ENCODE measurements at regions of chr1 and their contacts with region 1.

Region 1: GRCh38 chr1:91511386-91511785 is 10.7 kb downstream of the CDC7 start:
- DNase-seq: peak in 4 of 5 donors; percentile 41 to 46 (median 44)
- H3K4me3 ChIP-seq: no peak overlapping the region
- H3K4me3 Mint-ChIP-seq: no peak overlapping the region
- H3K27ac ChIP-seq: no peak overlapping the region
- H3K27ac Mint-ChIP-seq: peak overlapping the region in 1 of 7 donors; percentile 1
- H3K4me1 ChIP-seq: no peaks in the 10 kb centered on the region
- H3K4me1 Mint-ChIP-seq: peaks cover under 1 to 9% (median 6%) of the 10 kb centered on the region in 4 donors
- H3K27me3 ChIP-seq: no peaks in the 10 kb centered on the region
- H3K27me3 Mint-ChIP-seq: no peaks in the 10 kb centered on the region

Region 2: DNA sequence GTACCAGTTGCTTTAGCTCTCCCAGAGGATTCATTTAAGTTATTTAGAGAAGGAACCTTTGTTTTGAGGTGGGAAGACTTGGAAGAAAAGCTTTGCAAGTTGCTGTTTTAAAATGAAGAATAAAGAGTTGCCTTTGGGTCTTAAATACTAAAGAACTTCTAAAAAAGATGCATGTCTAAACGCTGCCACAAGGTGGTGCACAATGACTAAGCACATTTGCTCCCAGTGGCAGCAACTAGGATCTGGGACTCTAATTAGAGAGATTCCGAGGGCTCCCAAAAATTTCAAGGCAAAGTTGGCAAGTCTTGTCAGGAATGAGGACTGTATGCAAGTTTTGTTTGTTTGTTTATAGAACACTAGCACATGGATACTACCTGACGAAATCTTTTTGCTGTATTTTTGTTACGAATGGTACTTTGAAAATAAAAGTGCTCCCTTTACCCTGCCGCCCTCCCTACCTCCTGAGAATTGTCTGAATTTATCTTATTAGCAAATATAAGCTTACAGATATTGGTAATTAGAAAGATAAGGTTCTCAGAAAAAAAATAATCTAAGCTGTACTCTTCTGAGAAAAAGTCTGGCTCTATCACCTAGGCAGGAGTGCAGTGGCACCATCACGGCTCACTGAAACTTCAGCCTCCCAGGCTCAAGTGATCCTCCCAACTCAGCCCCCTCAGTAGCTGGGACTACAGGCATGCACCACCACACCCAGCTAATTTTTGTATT is 228.5 kb before region 1 on chr1:
- CTCF ChIA-PET with region 1: interaction called, 19 read pairs
- POLR2A ChIA-PET with region 1: no interaction called
- intact Hi-C with region 1: loop called (anchors 1 kb)
- DNase-seq: peak; percentile 32 to 38 (median 33)
- H3K4me3 ChIP-seq: no peak overlapping the region
- H3K4me3 Mint-ChIP-seq: no peak overlapping the region
- H3K27ac ChIP-seq: no peak overlapping the region
- H3K27ac Mint-ChIP-seq: no peak overlapping the region
- H3K4me1 ChIP-seq: no peaks in the 10 kb centered on the region
- H3K4me1 Mint-ChIP-seq: no peaks in the 10 kb centered on the region
- H3K27me3 ChIP-seq: no peaks in the 10 kb centered on the region
- H3K27me3 Mint-ChIP-seq: peaks cover 3 to 9% of the 10 kb centered on the region in 2 donors

Region 3: GRCh38 chr1:91476533-91477217 is 34.7 kb before region 1 on chr1:
- CTCF ChIA-PET with region 1: no interaction called
- POLR2A ChIA-PET with region 1: no interaction called
- intact Hi-C with region 1: no loop called
- DNase-seq: no peak
- H3K4me3 ChIP-seq: no peak overlapping the region
- H3K4me3 Mint-ChIP-seq: no peak overlapping the region
- H3K27ac ChIP-seq: no peak overlapping the region
- H3K27ac Mint-ChIP-seq: no peak overlapping the region
- H3K4me1 ChIP-seq: no peaks in the 10 kb centered on the region
- H3K4me1 Mint-ChIP-seq: no peaks in the 10 kb centered on the region
- H3K27me3 ChIP-seq: no peaks in the 10 kb centered on the region
- H3K27me3 Mint-ChIP-seq: no peaks in the 10 kb centered on the region

Region 4: DNA sequence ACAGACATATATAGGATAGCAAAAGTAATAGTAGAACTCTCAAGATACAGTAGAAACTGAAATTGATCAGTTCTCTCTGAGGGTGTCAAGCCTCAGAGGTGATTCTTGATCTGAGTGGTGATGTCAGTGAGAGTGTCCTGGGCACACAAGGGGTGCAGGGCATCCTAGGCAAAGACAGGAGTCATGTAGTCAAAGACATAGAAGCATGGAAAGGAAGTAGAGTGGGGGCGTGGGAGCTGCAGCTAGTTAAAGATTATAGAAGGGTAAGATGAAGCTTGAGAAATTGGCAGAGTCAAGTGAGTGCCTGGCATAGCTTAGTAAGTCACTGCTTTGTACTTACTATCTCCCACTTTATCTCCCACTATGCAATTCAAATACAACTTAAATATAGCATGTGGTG is 12.1 kb after region 1 on chr1:
- CTCF ChIA-PET with region 1: interaction called, 38 read pairs
- POLR2A ChIA-PET with region 1: no interaction called
- intact Hi-C with region 1: no loop called
- DNase-seq: no peak
- H3K4me3 ChIP-seq: no peak overlapping the region
- H3K4me3 Mint-ChIP-seq: no peak overlapping the region
- H3K27ac ChIP-seq: no peak overlapping the region
- H3K27ac Mint-ChIP-seq: peak overlapping the region in 4 of 7 donors; percentile 28 to 90 (median 64)
- H3K4me1 ChIP-seq: peaks cover 4% of the 10 kb centered on the region
- H3K4me1 Mint-ChIP-seq: peaks cover 4 to 10% (median 7%) of the 10 kb centered on the region in 4 donors
- H3K27me3 ChIP-seq: no peaks in the 10 kb centered on the region
- H3K27me3 Mint-ChIP-seq: no peaks in the 10 kb centered on the region

Region 5: DNA sequence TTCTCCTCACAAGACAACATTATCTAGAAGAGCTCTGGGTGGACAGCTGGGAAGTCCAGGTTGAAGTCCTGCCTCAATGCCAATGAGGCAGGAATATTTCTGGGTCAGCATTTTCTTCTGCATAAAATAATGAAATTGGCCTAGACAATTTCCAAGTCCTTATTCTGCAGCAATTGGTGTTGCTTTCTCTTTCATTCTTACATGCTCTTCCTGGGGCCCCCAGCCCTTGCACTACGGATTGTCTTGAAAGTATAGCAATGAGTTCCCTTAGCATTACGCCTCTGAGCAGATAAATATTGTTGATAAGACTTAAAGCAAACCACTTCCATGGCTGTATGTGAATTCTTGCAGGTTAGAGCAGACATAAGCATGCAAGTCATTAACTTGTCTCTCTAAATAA is 186.0 kb after region 1 on chr1:
- CTCF ChIA-PET with region 1: interaction called, 3 read pairs
- POLR2A ChIA-PET with region 1: no interaction called
- intact Hi-C with region 1: loop called (anchors 5 kb)
- DNase-seq: peak; percentile 56 to 75 (median 58)
- H3K4me3 ChIP-seq: no peak overlapping the region
- H3K4me3 Mint-ChIP-seq: peak overlapping the region in 7 of 8 donors; percentile 11 to 77 (median 39)
- H3K27ac ChIP-seq: no peak overlapping the region
- H3K27ac Mint-ChIP-seq: peak overlapping the region; percentile 74 to 91 (median 79)
- H3K4me1 ChIP-seq: peaks cover 23% of the 10 kb centered on the region
- H3K4me1 Mint-ChIP-seq: peaks cover 25 to 47% (median 39%) of the 10 kb centered on the region in 4 donors
- H3K27me3 ChIP-seq: no peaks in the 10 kb centered on the region
- H3K27me3 Mint-ChIP-seq: no peaks in the 10 kb centered on the region

Region 6: DNA sequence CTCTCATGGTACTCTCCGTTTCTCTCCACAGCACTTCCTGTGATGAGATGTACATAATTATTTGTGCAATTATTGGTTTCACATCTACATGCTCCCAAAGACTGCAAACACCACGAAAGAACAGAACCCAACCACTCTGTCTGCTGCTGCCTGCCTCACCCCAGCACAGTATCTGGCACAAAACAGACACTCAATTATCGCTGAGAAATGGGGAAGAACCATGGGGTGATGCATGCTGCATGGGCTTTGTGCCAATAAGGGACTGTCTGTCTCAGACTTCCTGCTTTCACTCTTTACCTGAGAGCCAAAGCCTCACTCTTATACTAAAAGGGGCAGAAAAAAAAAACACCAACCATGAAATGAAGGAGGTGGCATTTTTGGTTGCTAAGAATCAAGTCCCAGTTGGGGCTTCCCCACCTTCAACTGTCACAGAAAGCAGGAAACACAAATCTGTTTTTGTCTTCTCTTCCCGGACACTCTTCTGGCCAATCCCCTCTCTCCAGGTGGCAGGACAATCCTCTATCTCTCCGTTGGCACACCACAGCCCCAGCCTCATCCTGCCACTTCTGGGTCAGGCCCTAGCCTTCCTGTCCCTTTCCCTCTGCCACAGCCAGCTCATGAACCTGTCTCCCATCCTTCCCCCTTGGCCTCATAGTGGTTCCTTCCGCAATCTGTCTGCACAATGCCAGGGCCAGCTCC is 292.6 kb after region 1 on chr1:
- CTCF ChIA-PET with region 1: interaction called, 10 read pairs
- POLR2A ChIA-PET with region 1: interaction called, 4 read pairs
- intact Hi-C with region 1: loop called (anchors 2 kb)
- DNase-seq: peak; percentile 87 to 92 (median 89)
- H3K4me3 ChIP-seq: peak overlapping the region; percentile 27 to 61
- H3K4me3 Mint-ChIP-seq: peak overlapping the region; percentile 73 to 90 (median 80)
- H3K27ac ChIP-seq: peak overlapping the region; percentile 98
- H3K27ac Mint-ChIP-seq: peak overlapping the region; percentile 97 to 100 (median 100)
- H3K4me1 ChIP-seq: peaks cover 49% of the 10 kb centered on the region
- H3K4me1 Mint-ChIP-seq: peaks cover 44 to 66% (median 51%) of the 10 kb centered on the region in 4 donors
- H3K27me3 ChIP-seq: no peaks in the 10 kb centered on the region
- H3K27me3 Mint-ChIP-seq: no peaks in the 10 kb centered on the region

Region 7: DNA sequence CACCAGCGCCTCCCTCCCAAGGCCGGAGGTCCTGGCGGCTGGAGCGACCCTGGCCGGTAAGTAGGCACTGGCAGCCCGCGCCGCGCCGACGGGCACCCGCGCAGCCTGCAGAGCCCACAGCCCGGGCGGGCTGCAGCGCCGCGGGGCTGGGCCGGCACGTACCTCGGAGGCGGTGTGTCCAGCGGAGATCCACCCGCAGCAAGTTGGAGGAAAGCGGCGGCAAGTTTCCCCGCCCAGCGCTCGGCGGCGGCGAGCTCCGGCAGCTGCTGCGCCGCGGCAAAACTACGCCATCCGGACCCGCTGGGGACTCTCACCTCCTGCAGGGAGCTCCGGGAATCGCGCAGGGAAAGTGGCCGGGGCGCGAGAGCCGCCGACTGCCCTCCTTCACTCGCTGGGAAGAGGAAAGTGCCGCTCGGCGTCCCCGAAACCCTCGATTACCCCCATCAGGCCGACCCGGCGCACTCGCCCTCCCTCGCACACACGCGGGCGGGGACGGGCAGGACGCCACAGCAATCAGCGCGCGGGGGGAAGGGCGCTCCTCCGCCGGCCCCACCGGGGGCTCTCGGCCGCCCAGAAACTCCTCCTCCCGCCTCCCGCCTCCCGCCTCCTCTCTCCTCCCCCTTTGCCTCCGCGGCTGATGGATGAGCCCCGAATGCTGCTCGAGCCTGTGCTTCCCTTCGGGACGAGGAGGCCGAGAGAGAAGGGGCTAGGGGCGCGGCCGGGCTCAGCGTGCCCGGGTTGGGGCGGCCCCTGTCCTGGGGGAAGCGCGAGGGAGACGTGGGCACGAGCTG is 374.5 kb after region 1 on chr1 and contains the start of gene TGFBR3:
- CTCF ChIA-PET with region 1: interaction called, 73 read pairs
- POLR2A ChIA-PET with region 1: interaction called, 6 read pairs
- intact Hi-C with region 1: loop called (anchors 1 kb)
- DNase-seq: peak; percentile 78 to 81 (median 80)
- H3K4me3 ChIP-seq: peak within 1 kb of the TSS; percentile 67 to 87
- H3K4me3 Mint-ChIP-seq: peak within 1 kb of the TSS; percentile 94 to 99 (median 97)
- H3K27ac ChIP-seq: peak within 1 kb of the TSS; percentile 65
- H3K27ac Mint-ChIP-seq: peak within 1 kb of the TSS; percentile 84 to 97 (median 94)
- H3K4me1 ChIP-seq: peaks cover 37% of the 10 kb centered on the region
- H3K4me1 Mint-ChIP-seq: peaks cover 30 to 52% (median 39%) of the 10 kb centered on the region in 4 donors
- H3K27me3 ChIP-seq: no peaks in the 10 kb centered on the region
- H3K27me3 Mint-ChIP-seq: no peaks in the 10 kb centered on the region
- total RNA-seq, gene TGFBR3: 44.4 to 47.3 TPM

Region 8: DNA sequence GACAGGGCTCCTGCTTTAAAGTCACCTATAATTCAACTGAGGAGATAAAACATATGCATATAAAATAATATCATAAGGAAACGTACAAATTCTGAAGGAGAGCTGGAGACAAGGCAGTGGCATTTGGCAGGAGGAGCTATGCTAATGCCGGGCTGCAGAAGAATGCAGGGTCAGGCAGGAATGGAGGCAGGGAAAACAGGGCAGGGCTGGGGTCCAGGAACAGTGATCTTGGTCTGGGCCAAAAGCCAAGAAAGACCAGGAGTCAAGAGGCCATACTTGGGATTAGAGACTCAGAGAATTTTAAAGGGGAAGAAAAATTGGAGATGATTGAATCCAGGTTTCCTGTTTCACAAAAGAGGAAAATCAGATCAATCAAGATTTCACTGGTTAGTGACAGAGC is 417.9 kb after region 1 on chr1:
- CTCF ChIA-PET with region 1: interaction called, 190 read pairs
- POLR2A ChIA-PET with region 1: no interaction called
- intact Hi-C with region 1: loop called (anchors 1 kb)
- DNase-seq: no peak
- H3K4me3 ChIP-seq: no peak overlapping the region
- H3K4me3 Mint-ChIP-seq: no peak overlapping the region
- H3K27ac ChIP-seq: no peak overlapping the region
- H3K27ac Mint-ChIP-seq: peak overlapping the region in 2 of 7 donors; percentile 61 to 74
- H3K4me1 ChIP-seq: no peaks in the 10 kb centered on the region
- H3K4me1 Mint-ChIP-seq: peaks cover under 1 to 2% (median 1%) of the 10 kb centered on the region in 4 donors
- H3K27me3 ChIP-seq: no peaks in the 10 kb centered on the region
- H3K27me3 Mint-ChIP-seq: no peaks in the 10 kb centered on the region

Measured in CD4-positive, alpha-beta memory T cell (primary cell).